ENCODE measurements at regions of chr1 and their contacts with region 1.

Region 1: DNA sequence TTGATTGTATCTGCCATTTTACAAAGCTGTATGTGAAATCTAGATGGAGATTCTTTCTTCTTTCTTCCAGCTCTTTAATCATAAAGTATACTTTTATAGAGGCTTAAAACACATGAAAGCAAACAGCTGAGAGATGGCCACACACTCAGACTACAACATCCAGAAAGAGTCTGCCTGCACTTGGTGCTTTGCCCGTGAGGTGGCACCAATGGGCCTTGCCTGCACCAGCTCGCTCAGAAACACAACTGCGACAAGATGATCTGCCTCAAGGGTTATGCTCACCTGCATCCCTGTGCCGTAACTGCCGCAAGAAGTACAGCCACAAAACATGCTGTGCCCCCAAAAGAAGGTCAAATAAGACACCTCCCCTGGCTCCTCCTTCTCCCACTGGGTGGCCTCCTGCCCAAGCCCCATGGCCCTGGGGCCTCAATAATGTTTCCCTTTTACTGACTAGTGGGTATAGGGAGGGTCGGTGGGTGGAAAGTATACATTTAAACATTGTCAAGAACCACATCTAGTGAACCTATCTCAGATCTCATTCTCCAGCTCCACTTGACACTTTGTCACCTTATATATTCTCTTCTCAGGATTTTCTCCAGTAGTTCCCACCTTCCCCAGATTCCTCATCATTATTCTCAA is 66.7 kb upstream of the ANGPTL3 start:
- DNase-seq: peak in 1 of 2 donors; percentile 56
- H3K4me3 ChIP-seq: no peak overlapping the region
- H3K27ac ChIP-seq: no peak overlapping the region
- H3K4me1 ChIP-seq: no peaks in the 10 kb centered on the region
- H3K27me3 ChIP-seq: no peaks in the 10 kb centered on the region
- CTCF ChIP-seq: peak in 2 of 3 donors; percentile 43 to 48
- POLR2A ChIP-seq: no peak

Region 2: DNA sequence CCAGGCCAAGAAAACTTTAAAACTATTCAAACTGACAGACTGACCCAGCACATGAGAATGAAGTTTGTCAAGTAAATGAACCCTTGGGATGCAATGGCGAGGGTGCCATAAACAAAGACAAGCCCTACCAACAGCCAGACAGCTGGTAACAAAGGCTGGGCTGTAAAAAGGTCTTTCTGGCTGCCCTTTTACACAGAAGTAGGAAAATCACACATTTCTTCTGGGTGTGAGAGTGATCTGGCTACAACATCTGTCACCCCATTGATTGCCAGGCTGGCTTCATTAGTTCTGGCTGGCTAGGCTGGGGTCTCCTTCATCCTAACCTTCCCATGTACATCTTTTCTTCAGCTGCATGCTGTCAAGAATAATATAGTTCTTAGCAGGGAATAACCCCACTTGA is 708.1 kb after region 1 on chr1:
- intact Hi-C with region 1: loop called (anchors 5 kb)
- DNase-seq: no peak
- H3K4me3 ChIP-seq: no peak overlapping the region
- H3K27ac ChIP-seq: no peak overlapping the region
- H3K4me1 ChIP-seq: no peaks in the 10 kb centered on the region
- H3K27me3 ChIP-seq: no peaks in the 10 kb centered on the region
- CTCF ChIP-seq: no peak
- POLR2A ChIP-seq: no peak

Measured in breast epithelium (tissue), 4 donors.